Activated CD4-positive, alpha-beta T cell treated with anti-CD3 and anti-CD28 coated beads, Interleukin-2, amount 10 ng/mL, durations not matched to agents 7 days and 5 days (primary cell): ENCODE measurements at regions of chr9 and their contacts with region 1.

Region 1: DNA sequence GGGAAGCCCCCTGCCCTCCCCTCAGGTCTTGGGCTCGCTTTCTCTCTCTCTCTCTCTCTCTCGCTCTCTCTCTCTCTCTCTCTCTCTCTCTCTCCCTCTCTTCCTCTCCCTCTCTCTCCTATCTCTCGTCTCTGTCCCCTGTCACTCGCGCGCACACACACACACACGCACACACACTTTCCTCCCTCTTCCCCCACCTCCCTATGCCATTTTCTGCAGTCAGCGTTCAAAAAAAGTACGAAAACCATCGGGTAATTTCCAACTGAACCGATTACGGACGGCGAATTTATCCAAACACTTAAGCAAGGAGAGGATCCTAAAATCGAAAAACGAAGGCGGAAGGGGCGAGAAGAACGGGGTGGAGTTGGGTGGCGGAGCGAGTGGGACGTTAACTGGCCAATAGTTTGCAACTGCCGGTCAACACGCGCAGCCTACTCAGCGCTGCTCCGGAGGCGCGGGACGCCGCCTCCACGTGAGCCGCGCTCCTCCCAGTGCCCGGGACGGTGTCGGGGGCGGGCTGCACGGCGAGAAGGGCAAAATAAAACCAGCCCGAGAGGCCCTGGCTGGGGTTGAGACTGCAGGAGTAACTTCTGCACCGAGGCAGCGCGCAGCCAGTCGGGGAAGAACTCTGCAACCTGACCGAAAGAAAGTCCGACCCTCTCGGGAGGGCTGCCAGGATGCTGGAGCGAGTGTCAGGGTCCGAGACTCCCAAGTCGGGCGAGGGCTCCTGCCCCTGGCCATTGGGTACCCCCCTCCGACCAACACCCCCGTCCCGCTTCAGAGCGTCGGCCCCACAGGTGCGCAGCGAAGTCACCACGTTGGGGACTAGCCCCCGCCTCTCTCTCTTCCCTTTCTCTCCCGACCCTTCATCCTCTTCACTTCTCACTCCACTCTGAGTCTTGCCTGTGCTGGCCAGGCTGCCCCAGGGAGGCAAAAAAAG is 24.9 kb upstream of the ELAVL2 start:
- DNase-seq: no peak
- H3K4me3 Mint-ChIP-seq: no peak overlapping the region
- H3K27ac Mint-ChIP-seq: peak overlapping the region; percentile 46
- H3K4me1 Mint-ChIP-seq: no peaks in the 10 kb centered on the region
- H3K27me3 Mint-ChIP-seq: peaks cover 19% of the 10 kb centered on the region

Region 2: GRCh38 chr9:23826120-23826629 is 24.8 kb before region 1 on chr9 and contains the start of gene ELAVL2:
- CTCF ChIA-PET with region 1: no interaction called
- POLR2A ChIA-PET with region 1: no interaction called
- DNase-seq: peak; percentile 16
- H3K4me3 Mint-ChIP-seq: no peak within 1 kb of the TSS
- H3K27ac Mint-ChIP-seq: no peak within 1 kb of the TSS
- H3K4me1 Mint-ChIP-seq: no peaks in the 10 kb centered on the region
- H3K27me3 Mint-ChIP-seq: peaks cover 30% of the 10 kb centered on the region
- total RNA-seq, gene ELAVL2: not detected

Region 3: DNA sequence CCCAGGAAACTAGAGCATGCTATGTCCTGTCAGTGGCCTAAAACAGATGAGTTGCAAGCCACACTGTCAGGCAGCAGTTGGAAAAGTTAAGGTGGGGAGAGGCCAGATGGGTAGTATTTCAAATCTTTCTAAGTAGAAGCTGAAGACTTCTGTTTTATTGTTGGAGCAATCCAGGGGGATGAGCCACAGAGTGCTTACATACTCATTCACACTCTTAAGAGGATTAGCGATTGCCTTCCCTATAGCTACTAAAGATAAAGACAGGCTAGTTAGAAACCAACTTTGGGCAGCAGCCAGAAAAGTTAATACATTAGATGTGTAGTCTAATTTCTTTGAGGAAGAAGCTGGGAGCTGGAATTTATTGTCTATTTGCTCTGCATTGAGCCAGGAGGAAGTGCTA is 36.8 kb after region 1 on chr9:
- CTCF ChIA-PET with region 1: no interaction called
- POLR2A ChIA-PET with region 1: interaction called, 21 read pairs
- DNase-seq: no peak
- H3K4me3 Mint-ChIP-seq: no peak overlapping the region
- H3K27ac Mint-ChIP-seq: no peak overlapping the region
- H3K4me1 Mint-ChIP-seq: no peaks in the 10 kb centered on the region
- H3K27me3 Mint-ChIP-seq: no peaks in the 10 kb centered on the region